Heart left ventricle (tissue), 16 donors: ENCODE measurements at regions of chr9 and their contacts with region 1.

Region 1: DNA sequence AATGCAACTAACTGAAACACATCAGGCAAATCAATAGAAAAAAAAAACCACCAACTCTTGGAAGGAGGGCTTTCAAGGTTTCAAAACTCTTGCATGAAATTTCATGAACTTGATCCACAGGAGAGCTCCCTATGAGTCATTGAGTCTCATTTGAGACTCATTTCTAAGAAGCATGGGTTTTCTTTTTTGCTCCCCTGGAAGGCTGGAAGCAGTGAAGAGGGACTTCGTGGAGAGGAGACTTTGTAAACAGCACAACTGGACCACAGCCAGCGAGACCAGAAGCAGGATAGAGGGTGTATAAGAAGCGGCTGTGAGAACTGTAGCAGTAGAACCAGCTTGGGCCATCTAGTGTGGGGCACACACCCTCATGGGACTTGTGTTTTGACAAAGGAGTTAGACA is 41.2 kb upstream of the RAPGEF1 start:
- DNase-seq: no peak
- ATAC-seq: no peak
- H3K4me3 ChIP-seq: no peak overlapping the region
- H3K27ac ChIP-seq: no peak overlapping the region
- H3K4me1 ChIP-seq: no peaks in the 10 kb centered on the region
- H3K27me3 ChIP-seq: peaks cover 0 to 27% (median 0%) of the 10 kb centered on the region in 9 donors
- CTCF ChIP-seq: no peak
- POLR2A ChIP-seq: no peak

Region 2: GRCh38 chr9:132099741-132100407 is 318.8 kb after region 1 on chr9:
- intact Hi-C with region 1: loop called in 1 of 10 experiments (anchors 10 kb)
- DNase-seq: no peak
- ATAC-seq: no peak
- H3K4me3 ChIP-seq: no peak overlapping the region
- H3K27ac ChIP-seq: no peak overlapping the region
- H3K4me1 ChIP-seq: no peaks in the 10 kb centered on the region
- H3K27me3 ChIP-seq: peaks cover 0 to 18% (median 0%) of the 10 kb centered on the region in 9 donors
- CTCF ChIP-seq: no peak
- POLR2A ChIP-seq: no peak